ENCODE measurements at regions of chr12 and their contacts with region 1.

Region 1: GRCh38 chr12:1533602-1534304 is 60.6 kb downstream of the FBXL14 start:
- DNase-seq: peak in 8 of 9 experiments; percentile 16 to 66 (median 43)
- ATAC-seq: peak; percentile 54
- H3K4me3 ChIP-seq: peak overlapping the region; percentile 35 to 37
- H3K4me3 Mint-ChIP-seq: peak overlapping the region; percentile 79
- H3K27ac ChIP-seq: no peak overlapping the region
- H3K27ac Mint-ChIP-seq: no peak overlapping the region
- H3K4me1 ChIP-seq: peaks cover 45% of the 10 kb centered on the region
- H3K4me1 Mint-ChIP-seq: peaks cover 30% of the 10 kb centered on the region
- H3K27me3 ChIP-seq: peaks cover 31 to 45% of the 10 kb centered on the region in 2 experiments
- H3K27me3 Mint-ChIP-seq: peaks cover 56% of the 10 kb centered on the region
- CTCF ChIP-seq: no peak

Region 2: GRCh38 chr12:1491983-1492697 is 41.6 kb before region 1 on chr12:
- CTCF ChIA-PET with region 1: no interaction called
- POLR2A ChIA-PET with region 1: no interaction called
- intact Hi-C with region 1: loop called in 1 of 2 experiments (anchors 5 kb)
- DNase-seq: no peak
- ATAC-seq: no peak
- H3K4me3 ChIP-seq: no peak overlapping the region
- H3K4me3 Mint-ChIP-seq: no peak overlapping the region
- H3K27ac ChIP-seq: no peak overlapping the region
- H3K27ac Mint-ChIP-seq: no peak overlapping the region
- H3K4me1 ChIP-seq: peaks cover 23% of the 10 kb centered on the region
- H3K4me1 Mint-ChIP-seq: peaks cover 24% of the 10 kb centered on the region
- H3K27me3 ChIP-seq: no peaks in the 10 kb centered on the region
- H3K27me3 Mint-ChIP-seq: no peaks in the 10 kb centered on the region
- CTCF ChIP-seq: no peak